ENCODE measurements at regions of chr14 and their contacts with region 1.

Region 1: GRCh38 chr14:94485944-94486841 is 10.2 kb upstream of the SERPINA9 start:
- DNase-seq: peak in 7 of 9 experiments; percentile 16 to 57 (median 35)
- ATAC-seq: no peak
- H3K4me3 ChIP-seq: no peak overlapping the region
- H3K4me3 Mint-ChIP-seq: no peak overlapping the region
- H3K27ac ChIP-seq: no peak overlapping the region
- H3K27ac Mint-ChIP-seq: no peak overlapping the region
- H3K4me1 ChIP-seq: peaks cover 7% of the 10 kb centered on the region
- H3K4me1 Mint-ChIP-seq: peaks cover 5% of the 10 kb centered on the region
- H3K27me3 ChIP-seq: peaks cover 0 to 6% of the 10 kb centered on the region in 2 experiments
- H3K27me3 Mint-ChIP-seq: peaks cover 27% of the 10 kb centered on the region
- CTCF ChIP-seq: peak; percentile 85

Region 2: DNA sequence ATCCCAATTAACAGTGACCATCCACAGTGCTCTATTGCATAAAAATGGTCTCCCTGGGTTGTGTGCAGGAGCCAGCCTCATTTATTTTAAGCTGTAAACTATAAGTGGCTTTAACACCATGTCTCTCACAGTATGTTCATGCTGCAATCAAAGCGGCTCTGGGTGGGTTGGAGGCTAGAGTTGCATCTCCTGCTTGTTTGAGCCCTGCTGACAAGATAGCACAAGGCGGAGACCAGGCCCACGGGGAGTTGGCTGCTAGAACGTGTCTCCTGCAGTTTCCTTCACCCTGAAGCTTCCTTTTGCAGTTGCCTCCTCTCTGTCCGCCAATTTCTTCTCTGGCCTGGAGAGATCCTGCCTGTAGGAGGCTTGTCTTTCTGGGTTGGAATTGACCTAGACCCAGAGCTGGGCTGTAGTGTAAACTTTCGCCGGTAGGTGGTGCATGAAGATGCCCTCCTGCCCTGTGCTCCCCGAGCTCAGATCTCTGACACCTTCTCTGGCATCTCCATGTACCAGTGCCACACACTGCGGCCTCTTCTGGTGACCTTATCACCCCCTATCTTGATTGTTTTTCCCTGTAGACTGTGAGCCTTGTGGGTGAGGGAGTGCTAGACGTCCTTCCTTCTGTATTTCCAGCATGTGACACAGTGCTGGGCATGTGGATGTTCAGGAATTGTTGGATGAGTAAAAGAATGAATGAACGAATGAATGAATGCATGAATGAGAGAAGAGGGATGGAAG is 449.7 kb before region 1 on chr14:
- CTCF ChIA-PET with region 1: no interaction called
- POLR2A ChIA-PET with region 1: no interaction called
- intact Hi-C with region 1: loop called (anchors 5 to 10 kb)
- DNase-seq: peak; percentile 52 to 84 (median 78)
- ATAC-seq: peak; percentile 99
- H3K4me3 ChIP-seq: no peak overlapping the region
- H3K4me3 Mint-ChIP-seq: no peak overlapping the region
- H3K27ac ChIP-seq: no peak overlapping the region
- H3K27ac Mint-ChIP-seq: no peak overlapping the region
- H3K4me1 ChIP-seq: no peaks in the 10 kb centered on the region
- H3K4me1 Mint-ChIP-seq: peaks cover 3% of the 10 kb centered on the region
- H3K27me3 ChIP-seq: no peaks in the 10 kb centered on the region
- H3K27me3 Mint-ChIP-seq: no peaks in the 10 kb centered on the region
- CTCF ChIP-seq: peak; percentile 82

Region 3: GRCh38 chr14:94474581-94475031 is 11.6 kb before region 1 on chr14:
- CTCF ChIA-PET with region 1: interaction called, 37 read pairs
- POLR2A ChIA-PET with region 1: no interaction called
- intact Hi-C with region 1: no loop called
- DNase-seq: no peak
- ATAC-seq: no peak
- H3K4me3 ChIP-seq: no peak overlapping the region
- H3K4me3 Mint-ChIP-seq: no peak overlapping the region
- H3K27ac ChIP-seq: no peak overlapping the region
- H3K27ac Mint-ChIP-seq: no peak overlapping the region
- H3K4me1 ChIP-seq: no peaks in the 10 kb centered on the region
- H3K4me1 Mint-ChIP-seq: no peaks in the 10 kb centered on the region
- H3K27me3 ChIP-seq: no peaks in the 10 kb centered on the region
- H3K27me3 Mint-ChIP-seq: peaks cover 12% of the 10 kb centered on the region
- CTCF ChIP-seq: no peak

Region 4: GRCh38 chr14:94498215-94498614 is 12.0 kb after region 1 on chr14:
- CTCF ChIA-PET with region 1: interaction called, 11 read pairs
- POLR2A ChIA-PET with region 1: no interaction called
- intact Hi-C with region 1: no loop called
- DNase-seq: no peak
- ATAC-seq: no peak
- H3K4me3 ChIP-seq: no peak overlapping the region
- H3K4me3 Mint-ChIP-seq: no peak overlapping the region
- H3K27ac ChIP-seq: no peak overlapping the region
- H3K27ac Mint-ChIP-seq: no peak overlapping the region
- H3K4me1 ChIP-seq: no peaks in the 10 kb centered on the region
- H3K4me1 Mint-ChIP-seq: no peaks in the 10 kb centered on the region
- H3K27me3 ChIP-seq: no peaks in the 10 kb centered on the region
- H3K27me3 Mint-ChIP-seq: peaks cover 4% of the 10 kb centered on the region
- CTCF ChIP-seq: no peak

Region 5: DNA sequence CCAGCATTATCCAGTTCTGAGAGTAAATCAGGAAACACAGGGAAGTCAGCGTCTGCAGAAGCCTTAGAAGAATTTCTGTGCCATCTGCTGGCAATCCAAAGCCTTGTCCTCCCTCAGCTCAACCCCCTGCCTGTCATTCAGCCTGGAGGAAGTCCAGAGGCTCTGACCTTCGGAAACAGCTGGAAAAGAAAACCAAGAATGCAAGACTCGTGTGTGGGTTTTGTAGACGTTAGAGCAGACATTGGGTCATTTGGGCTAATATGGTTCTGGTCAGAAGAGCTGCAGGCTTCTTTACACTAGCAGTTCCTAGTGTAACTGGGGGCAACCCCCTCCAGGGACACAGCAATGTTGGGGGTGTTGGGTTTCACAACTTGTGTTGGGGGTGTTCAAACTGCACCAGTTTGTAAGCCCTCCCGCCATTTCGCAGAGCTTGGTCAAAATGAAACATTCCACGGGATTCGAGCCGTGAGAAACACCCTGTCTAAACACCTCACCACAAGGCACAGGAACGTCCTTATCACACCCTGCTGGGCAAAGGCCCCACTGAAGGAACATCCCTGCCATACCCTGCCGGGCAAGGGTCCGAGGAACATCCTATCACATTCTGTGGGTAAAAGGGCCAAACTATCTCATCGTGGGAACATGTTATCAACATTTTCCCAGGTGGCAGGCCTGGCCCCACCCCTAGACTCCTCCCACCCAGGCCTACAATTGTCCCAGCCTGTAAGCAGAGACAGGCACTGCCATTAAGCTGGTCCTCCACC is 54.0 kb after region 1 on chr14:
- CTCF ChIA-PET with region 1: no interaction called
- POLR2A ChIA-PET with region 1: no interaction called
- intact Hi-C with region 1: no loop called
- DNase-seq: no peak
- ATAC-seq: no peak
- H3K4me3 ChIP-seq: no peak overlapping the region
- H3K4me3 Mint-ChIP-seq: no peak overlapping the region
- H3K27ac ChIP-seq: no peak overlapping the region
- H3K27ac Mint-ChIP-seq: no peak overlapping the region
- H3K4me1 ChIP-seq: no peaks in the 10 kb centered on the region
- H3K4me1 Mint-ChIP-seq: no peaks in the 10 kb centered on the region
- H3K27me3 ChIP-seq: no peaks in the 10 kb centered on the region
- H3K27me3 Mint-ChIP-seq: peaks cover 14% of the 10 kb centered on the region
- CTCF ChIP-seq: no peak

Region 6: DNA sequence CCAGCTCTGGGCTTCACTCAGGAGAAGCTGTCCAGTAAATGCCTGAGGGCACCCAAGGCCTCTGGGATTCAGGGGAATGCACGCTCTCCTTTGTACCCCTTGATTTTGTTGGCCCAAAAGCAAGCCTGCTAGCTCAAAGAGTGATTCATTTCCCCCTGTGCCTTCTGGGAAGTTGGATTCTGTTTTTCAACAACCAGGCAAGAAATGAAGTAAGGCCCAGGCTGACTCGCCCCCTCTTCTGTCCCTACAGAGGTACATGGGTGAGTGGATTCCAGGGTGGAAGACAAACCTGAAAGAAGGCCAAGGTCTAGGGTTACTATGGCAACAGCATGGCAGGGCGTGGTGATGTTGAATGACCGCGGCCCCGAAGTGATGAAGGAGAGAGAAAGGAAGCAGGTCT is 85.8 kb after region 1 on chr14:
- CTCF ChIA-PET with region 1: no interaction called
- POLR2A ChIA-PET with region 1: no interaction called
- intact Hi-C with region 1: no loop called
- DNase-seq: no peak
- ATAC-seq: no peak
- H3K4me3 ChIP-seq: no peak overlapping the region
- H3K4me3 Mint-ChIP-seq: no peak overlapping the region
- H3K27ac ChIP-seq: no peak overlapping the region
- H3K27ac Mint-ChIP-seq: no peak overlapping the region
- H3K4me1 ChIP-seq: no peaks in the 10 kb centered on the region
- H3K4me1 Mint-ChIP-seq: no peaks in the 10 kb centered on the region
- H3K27me3 ChIP-seq: no peaks in the 10 kb centered on the region
- H3K27me3 Mint-ChIP-seq: peaks cover 5% of the 10 kb centered on the region
- CTCF ChIP-seq: no peak

Measured in CD8-positive, alpha-beta T cell (primary cell).